ENCODE measurements at regions of chr1 and their contacts with region 1.

Region 1: DNA sequence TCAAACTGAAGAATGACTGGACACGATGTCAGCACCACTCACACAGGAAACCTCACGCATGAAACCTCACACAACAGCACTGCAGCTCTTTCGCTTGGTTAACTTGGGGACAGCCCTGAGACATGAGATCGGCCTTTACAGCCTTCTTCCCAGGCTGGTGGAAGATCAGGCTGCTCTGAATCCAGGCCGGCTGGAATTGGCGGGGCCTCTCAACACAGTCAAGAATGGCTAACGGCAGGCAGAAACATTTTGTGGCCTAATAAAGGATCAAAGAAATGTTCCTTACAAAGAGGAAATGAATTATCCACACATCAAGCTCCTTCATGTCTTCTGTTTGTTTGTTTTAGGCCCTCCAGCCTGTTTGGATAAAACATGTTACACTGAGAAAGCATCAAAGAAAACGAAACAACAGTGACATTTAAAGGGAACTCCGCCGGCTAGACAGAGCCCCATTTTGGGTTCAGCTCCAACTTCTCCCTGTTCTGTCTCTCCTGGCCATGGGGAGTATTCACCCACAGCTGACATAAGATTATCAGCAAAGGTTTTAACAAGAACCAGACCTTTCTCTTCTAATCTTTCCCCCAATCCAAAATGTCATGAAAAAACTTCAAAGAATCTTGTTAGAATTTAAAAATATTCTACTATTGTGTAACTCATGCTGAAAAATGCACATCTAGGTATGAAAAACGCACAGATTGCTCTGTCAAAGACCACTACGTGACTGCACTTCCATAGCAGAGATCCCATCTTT is 131.2 kb downstream of the SLC45A1 start:
- DNase-seq: no peak
- H3K4me3 ChIP-seq: no peak overlapping the region
- CTCF ChIP-seq: no peak
- POLR2A ChIP-seq: no peak

Region 2: DNA sequence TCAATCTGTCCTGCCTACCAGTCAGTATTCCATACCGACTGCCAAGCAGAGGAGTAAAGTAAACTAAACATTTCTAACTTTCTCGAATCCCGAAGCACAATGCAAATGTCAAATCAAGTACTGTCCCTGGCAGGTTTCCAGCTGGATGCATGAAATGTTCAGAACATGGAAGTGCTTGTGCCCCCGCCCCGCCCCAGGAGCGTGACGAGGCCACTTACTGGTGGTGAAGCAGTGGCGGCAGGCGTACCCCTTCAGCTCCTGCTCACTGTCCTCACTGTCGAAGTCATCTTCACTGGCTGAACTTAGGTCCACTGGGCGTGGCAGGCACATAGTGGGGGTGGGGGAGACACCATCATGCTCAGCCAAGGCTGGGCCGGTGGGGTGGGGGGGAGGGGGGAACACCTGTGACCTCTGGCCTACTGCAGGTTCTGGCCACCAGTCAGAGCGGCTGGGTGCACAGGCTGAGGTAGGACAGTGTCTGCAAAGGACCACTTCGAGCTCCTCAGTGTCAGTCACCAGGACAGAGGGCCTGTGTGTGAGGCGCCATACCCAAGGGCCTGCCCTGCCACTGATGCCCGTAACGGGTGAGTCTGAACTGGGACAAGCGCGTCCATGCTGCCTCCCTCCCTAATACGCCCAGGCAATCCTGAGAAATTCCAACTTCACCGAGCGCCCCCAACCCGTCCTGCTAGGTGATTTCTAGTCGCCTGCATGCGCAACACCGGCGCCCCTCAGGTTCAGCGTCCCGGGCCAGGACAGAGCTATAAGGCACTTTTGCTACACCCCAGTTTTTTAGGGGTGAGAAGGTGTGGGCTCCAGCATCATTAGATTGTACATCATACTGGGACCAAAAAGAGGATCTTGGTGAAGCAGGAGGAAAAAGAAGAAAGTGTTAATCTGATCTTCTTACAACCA is 84.3 kb before region 1 on chr1:
- intact Hi-C with region 1: loop called (anchors 10 kb)
- DNase-seq: peak in 1 of 2 donors; percentile 87
- H3K4me3 ChIP-seq: no peak overlapping the region
- CTCF ChIP-seq: no peak
- POLR2A ChIP-seq: no peak

Measured in lower leg skin (tissue), 4 donors.